Activated T-helper 1 cell treated with anti-CD3 and anti-CD28 coated beads, Interleukin-12 subunit alpha, Interleukin-12 subunit beta, Interleukin-2, Interleukin-4 antibody, amounts not matched to agents 30 ng/mL and 10 ng/mL and 1 ng/mL, durations not matched to agents 14 hours and 24 hours and 36 hours (primary cell): ENCODE measurements at regions of chr7 and their contacts with region 1.

Region 1: DNA sequence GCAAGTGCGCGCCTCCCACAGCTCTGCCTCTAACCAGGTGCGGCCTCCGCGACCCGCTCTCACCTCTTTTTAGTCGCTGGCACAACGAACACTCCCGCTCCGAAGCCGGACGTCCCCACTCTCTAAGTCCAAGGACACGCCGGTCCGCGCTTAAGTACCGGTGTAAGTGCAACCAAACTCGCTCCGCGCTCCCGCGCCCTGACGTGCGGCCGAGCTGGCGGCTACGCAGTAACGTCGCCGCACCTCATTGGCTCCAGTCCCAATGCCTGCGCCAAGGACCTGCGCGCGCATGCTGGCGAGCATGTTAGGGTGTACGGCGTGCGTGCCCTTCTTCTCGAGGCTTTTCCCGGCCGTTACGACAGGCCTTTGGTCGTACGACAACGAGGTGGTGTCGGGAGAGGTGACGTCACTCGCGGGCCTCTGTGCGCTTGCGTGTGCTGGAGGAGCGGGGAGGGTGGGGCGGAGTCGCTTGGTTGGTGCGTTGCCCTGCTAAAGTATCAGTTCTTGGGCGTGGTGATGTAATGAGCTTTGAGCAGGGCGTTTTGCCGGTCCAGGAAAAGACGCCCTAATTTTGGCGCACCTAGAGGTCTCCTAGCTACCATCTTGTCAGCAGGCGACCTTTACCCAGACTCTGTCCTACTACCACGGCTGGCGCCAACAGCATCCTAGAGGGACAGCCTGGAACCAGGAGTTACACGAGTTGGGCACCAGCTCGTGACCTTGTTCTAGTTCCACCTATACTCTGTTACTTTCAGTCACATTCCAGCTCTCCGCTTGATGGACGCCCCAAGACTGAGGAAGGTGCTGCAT is at the start of gene CYCS:
- DNase-seq: peak; percentile 100
- H3K4me3 Mint-ChIP-seq: peak within 1 kb of the TSS; percentile 93
- H3K27ac Mint-ChIP-seq: peak within 1 kb of the TSS; percentile 99
- H3K4me1 Mint-ChIP-seq: peaks cover 29% of the 10 kb centered on the region
- H3K27me3 Mint-ChIP-seq: no peaks in the 10 kb centered on the region
- total RNA-seq, gene CYCS: 280 TPM in 2 replicates

Region 2: GRCh38 chr7:23298885-23299769 is 1826.2 kb before region 1 on chr7 and contains the start of gene MALSU1:
- intact Hi-C with region 1: loop called (anchors 1 kb)
- DNase-seq: peak; percentile 93
- H3K4me3 Mint-ChIP-seq: peak within 1 kb of the TSS; percentile 88
- H3K27ac Mint-ChIP-seq: peak within 1 kb of the TSS; percentile 88
- H3K4me1 Mint-ChIP-seq: peaks cover 38% of the 10 kb centered on the region
- H3K27me3 Mint-ChIP-seq: peaks cover 4% of the 10 kb centered on the region
- total RNA-seq, gene MALSU1: 92.3 and 92.8 TPM in 2 replicates

Region 3: DNA sequence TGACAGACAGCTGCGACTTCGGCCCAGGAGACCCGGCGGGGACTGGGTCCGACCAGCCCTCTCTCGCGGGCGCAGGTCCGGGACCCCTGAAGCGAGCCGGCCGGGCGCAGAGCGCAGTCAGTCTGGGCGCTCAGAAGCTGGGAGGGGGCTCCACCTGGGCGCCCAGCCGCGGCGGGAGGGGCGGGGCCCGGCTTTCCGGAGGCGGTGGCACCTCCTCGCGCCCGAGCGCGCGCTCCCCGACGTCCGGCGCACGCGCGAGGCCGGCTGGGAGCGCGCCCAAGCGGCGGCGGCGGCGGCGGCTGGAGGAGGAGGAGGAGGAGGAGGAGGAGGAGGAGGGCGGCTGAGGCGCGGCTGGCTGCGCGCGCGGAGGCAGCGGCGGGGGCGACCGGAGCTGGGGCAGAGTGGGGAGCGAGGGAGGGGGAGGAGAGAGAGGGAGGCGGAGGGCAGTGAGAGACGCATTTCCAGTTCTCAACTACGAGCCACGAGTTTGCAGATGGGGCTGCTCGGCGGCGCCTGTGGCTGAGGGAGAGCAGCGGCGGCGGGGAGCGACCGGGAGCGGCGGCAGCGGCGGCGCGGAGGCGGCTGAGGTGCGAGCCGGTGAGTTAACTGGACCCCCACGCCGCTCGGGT is 552.2 kb before region 1 on chr7 and contains the start of gene PALS2:
- intact Hi-C with region 1: loop called (anchors 1 kb)
- DNase-seq: peak; percentile 77
- H3K4me3 Mint-ChIP-seq: peak within 1 kb of the TSS; percentile 94
- H3K27ac Mint-ChIP-seq: peak within 1 kb of the TSS; percentile 84
- H3K4me1 Mint-ChIP-seq: peaks cover 29% of the 10 kb centered on the region
- H3K27me3 Mint-ChIP-seq: peaks cover 41% of the 10 kb centered on the region
- total RNA-seq, gene PALS2: 34.9 and 42.2 TPM in 2 replicates

Region 4: GRCh38 chr7:25158966-25159365 is 33.6 kb after region 1 on chr7:
- intact Hi-C with region 1: loop called (anchors 1 kb)
- DNase-seq: no peak
- H3K4me3 Mint-ChIP-seq: no peak overlapping the region
- H3K27ac Mint-ChIP-seq: no peak overlapping the region
- H3K4me1 Mint-ChIP-seq: no peaks in the 10 kb centered on the region
- H3K27me3 Mint-ChIP-seq: no peaks in the 10 kb centered on the region

Region 5: DNA sequence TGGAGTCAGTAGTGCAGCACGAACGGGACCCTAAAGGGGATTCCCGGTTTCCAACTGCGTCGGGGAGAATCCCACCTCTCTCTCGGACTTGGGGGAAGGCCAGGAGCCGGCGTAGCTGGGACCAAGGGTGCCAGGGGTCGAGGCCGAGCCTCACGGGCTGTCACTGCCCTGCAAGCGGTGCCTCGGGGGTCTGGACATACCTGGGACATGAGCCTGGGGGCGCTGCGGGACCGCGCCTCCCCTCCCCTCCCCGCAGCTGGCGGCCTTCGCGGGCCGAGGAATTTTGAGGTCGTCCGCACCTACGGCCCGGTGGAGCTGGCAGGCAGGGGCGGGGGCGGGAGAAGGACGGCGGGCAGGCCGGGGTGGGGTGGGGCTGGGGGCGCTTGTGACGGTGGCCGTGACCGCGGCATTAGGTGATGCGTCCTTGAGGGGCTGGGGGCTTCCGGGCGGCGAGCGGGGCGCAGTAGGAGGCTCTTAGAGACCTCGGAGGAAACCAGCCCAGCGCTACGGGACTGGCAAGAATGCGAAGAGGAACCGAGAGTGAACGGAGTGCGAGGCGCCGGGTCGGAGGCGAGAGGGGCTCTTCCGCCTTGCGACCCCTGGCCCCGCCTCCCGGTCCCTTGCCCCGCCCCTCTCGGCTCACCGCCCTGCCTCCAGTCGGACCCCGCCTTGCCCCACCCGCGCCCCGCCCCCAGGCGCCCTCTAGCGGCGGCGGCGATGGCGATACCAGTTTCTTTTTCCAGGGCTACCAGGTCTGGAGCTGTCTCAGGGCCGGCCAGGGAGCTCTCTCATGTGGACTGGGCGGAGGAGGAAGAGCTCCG is 54.6 kb after region 1 on chr7:
- intact Hi-C with region 1: loop called (anchors 1 kb)
- DNase-seq: peak; percentile 91
- H3K4me3 Mint-ChIP-seq: peak overlapping the region; percentile 80
- H3K27ac Mint-ChIP-seq: peak overlapping the region; percentile 53
- H3K4me1 Mint-ChIP-seq: peaks cover 16% of the 10 kb centered on the region
- H3K27me3 Mint-ChIP-seq: peaks cover 14% of the 10 kb centered on the region

Region 6: GRCh38 chr7:25951031-25951948 is 825.9 kb after region 1 on chr7:
- intact Hi-C with region 1: loop called (anchors 2 kb)
- DNase-seq: peak; percentile 87
- H3K4me3 Mint-ChIP-seq: peak overlapping the region; percentile 91
- H3K27ac Mint-ChIP-seq: peak overlapping the region; percentile 74
- H3K4me1 Mint-ChIP-seq: peaks cover 17% of the 10 kb centered on the region
- H3K27me3 Mint-ChIP-seq: peaks cover 5% of the 10 kb centered on the region